Astrocyte of the cerebellum (primary cell): ENCODE measurements at regions of chr17 and their contacts with region 1.

Region 1: GRCh38 chr17:48738803-48739526 is 10.4 kb upstream of the HOXB13 start:
- DNase-seq: no peak
- H3K4me3 ChIP-seq: no peak overlapping the region
- CTCF ChIP-seq: no peak

Region 2: DNA sequence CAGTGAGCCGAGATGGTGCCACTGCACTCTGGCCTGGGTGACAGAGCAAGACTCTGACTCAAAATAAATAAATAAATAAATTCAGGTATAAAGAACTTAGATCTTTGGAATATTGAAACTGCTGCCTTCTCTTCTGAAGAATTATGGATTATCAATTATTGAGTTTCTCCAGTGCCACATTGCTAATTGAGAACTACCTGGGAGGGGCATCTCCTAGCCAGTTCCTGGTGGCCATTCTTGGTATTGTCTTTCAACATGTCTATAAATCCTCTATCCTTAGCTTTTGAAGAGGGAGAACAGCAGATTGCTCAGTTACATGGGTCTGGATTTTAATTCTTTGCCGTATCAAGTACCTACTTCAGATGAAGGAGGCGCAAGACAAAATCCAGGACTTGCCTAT is 121.1 kb after region 1 on chr17:
- in situ Hi-C with region 1: loop called (anchors 10 kb)
- DNase-seq: no peak
- H3K4me3 ChIP-seq: no peak overlapping the region
- CTCF ChIP-seq: peak; percentile 26